CD4-positive, alpha-beta T cell (primary cell): ENCODE measurements at regions of chr9 and their contacts with region 1.

Region 1: DNA sequence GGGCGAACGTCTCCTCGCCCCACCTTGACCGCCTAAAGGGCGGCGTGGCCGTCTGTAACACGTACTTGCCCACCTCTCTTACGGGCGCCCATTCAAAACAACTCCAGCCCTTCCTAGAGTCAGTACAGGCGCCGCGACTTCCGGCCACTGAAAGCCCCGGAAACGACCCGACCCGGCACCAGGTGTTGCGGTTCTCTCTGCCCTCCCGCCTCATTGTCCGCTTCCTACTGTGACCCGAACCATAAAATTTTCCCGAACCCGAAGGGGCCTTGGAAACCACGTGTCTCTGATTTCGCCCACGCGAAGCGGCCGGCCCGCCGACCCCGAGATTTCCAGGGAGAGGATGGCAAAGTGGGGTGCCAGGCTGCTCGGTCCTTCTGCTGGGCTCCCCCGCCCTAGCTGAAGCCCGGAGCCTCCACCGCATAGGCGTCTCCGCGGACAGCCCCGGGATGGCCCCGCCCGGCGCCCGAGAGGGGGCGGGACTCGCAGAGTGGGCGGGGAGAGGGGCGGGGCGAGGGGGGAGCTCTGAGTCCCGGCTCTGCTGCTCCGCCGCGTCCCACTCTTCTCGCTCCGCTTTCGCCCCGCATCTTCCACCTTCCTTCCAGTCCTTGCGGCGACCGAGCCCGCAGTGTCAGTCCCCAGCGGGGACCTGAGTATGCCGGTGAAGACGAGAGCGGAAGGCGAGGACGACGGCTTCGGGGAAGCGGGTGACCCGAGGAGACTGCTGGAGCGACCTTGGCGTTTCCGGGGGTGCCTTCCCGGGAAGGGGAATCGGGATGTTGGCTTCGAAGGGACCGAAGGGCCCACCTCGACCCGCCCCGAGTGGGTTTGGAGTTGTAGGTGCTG is 684 bp upstream of the PTGES2 start:
- DNase-seq: peak; percentile 69 to 94 (median 84)
- ATAC-seq: peak; percentile 79
- H3K4me3 ChIP-seq: peak overlapping the region; percentile 99
- H3K4me3 Mint-ChIP-seq: peak overlapping the region; percentile 100
- H3K27ac ChIP-seq: peak overlapping the region; percentile 94 to 97
- H3K27ac Mint-ChIP-seq: peak overlapping the region; percentile 100
- H3K4me1 ChIP-seq: peaks cover 44% of the 10 kb centered on the region
- H3K4me1 Mint-ChIP-seq: peaks cover 42% of the 10 kb centered on the region
- H3K27me3 ChIP-seq: no peaks in the 10 kb centered on the region
- H3K27me3 Mint-ChIP-seq: peaks cover 3% of the 10 kb centered on the region
- CTCF ChIP-seq: no peak

Region 2: GRCh38 chr9:127802576-127803443 is 325.4 kb before region 1 on chr9 and contains the start of gene FPGS:
- CTCF ChIA-PET with region 1: no interaction called
- POLR2A ChIA-PET with region 1: no interaction called
- intact Hi-C with region 1: loop called in 1 of 2 experiments (anchors 2 kb)
- DNase-seq: peak; percentile 63 to 94 (median 79)
- ATAC-seq: peak; percentile 90
- H3K4me3 ChIP-seq: peak within 1 kb of the TSS; percentile 79
- H3K4me3 Mint-ChIP-seq: peak within 1 kb of the TSS; percentile 91
- H3K27ac ChIP-seq: peak within 1 kb of the TSS; percentile 79
- H3K27ac Mint-ChIP-seq: peak within 1 kb of the TSS; percentile 80
- H3K4me1 ChIP-seq: peaks cover 29% of the 10 kb centered on the region
- H3K4me1 Mint-ChIP-seq: peaks cover 20% of the 10 kb centered on the region
- H3K27me3 ChIP-seq: no peaks in the 10 kb centered on the region
- H3K27me3 Mint-ChIP-seq: no peaks in the 10 kb centered on the region
- CTCF ChIP-seq: no peak
- total RNA-seq, gene FPGS: 58.0 to 66.6 TPM

Region 3: GRCh38 chr9:128159784-128160602 is 31.8 kb after region 1 on chr9 and contains the start of gene BBLN:
- CTCF ChIA-PET with region 1: interaction called, 4 read pairs
- POLR2A ChIA-PET with region 1: interaction called, 29 read pairs
- intact Hi-C with region 1: loop called (anchors 1 kb)
- DNase-seq: peak; percentile 86 to 97 (median 92)
- ATAC-seq: peak; percentile 78
- H3K4me3 ChIP-seq: peak within 1 kb of the TSS; percentile 97
- H3K4me3 Mint-ChIP-seq: peak within 1 kb of the TSS; percentile 89
- H3K27ac ChIP-seq: peak within 1 kb of the TSS; percentile 77 to 86
- H3K27ac Mint-ChIP-seq: peak within 1 kb of the TSS; percentile 92
- H3K4me1 ChIP-seq: peaks cover 24% of the 10 kb centered on the region
- H3K4me1 Mint-ChIP-seq: peaks cover 20% of the 10 kb centered on the region
- H3K27me3 ChIP-seq: no peaks in the 10 kb centered on the region
- H3K27me3 Mint-ChIP-seq: no peaks in the 10 kb centered on the region
- CTCF ChIP-seq: no peak
- total RNA-seq, gene BBLN: 53.6 to 55.9 TPM

Region 4: DNA sequence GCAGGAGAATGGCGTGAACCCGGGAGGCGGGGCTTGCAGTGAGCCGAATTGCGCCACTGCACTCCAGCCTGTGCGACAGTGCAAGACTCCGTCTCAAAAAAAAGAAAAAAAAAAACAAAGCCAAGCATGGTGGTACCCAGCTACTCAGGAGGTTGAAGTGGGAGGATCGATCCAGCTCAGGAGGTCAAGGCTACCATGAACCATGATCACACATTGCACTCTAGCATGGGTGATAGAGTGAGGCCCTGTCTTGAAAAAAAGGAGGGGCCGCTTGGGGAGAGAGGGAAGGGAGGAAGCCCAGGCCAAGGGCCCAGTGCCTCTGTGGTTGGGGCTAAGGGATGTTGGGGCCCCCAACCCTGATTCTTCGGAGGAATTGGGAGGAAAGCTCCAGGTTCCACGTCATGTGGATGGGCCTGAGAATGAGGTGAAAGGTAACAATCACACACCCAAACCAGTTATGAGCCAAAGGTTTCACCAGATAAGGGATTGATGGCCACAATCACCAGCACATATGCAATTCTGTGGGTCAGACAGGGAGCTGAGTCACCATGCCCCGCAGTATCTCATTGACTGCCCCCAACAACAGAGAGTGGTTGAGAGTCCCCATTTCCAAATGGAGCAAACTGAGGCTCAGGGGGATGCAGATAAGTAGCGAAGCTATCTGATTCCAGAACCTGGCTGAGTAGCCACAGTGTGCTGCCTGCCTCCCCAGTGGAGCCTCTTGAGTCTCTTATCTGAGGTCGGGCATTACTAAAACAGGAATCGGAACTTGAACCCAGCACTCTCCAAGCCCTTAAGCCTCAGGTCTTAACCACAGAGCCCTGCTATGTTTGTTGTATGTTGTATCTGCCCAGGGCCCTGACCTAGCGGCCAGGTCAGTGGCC is 168.4 kb after region 1 on chr9:
- CTCF ChIA-PET with region 1: no interaction called
- POLR2A ChIA-PET with region 1: no interaction called
- intact Hi-C with region 1: no loop called
- DNase-seq: no peak
- ATAC-seq: no peak
- H3K4me3 ChIP-seq: no peak overlapping the region
- H3K4me3 Mint-ChIP-seq: no peak overlapping the region
- H3K27ac ChIP-seq: no peak overlapping the region
- H3K27ac Mint-ChIP-seq: no peak overlapping the region
- H3K4me1 ChIP-seq: no peaks in the 10 kb centered on the region
- H3K4me1 Mint-ChIP-seq: peaks cover 5% of the 10 kb centered on the region
- H3K27me3 ChIP-seq: no peaks in the 10 kb centered on the region
- H3K27me3 Mint-ChIP-seq: no peaks in the 10 kb centered on the region
- CTCF ChIP-seq: no peak

Region 5: DNA sequence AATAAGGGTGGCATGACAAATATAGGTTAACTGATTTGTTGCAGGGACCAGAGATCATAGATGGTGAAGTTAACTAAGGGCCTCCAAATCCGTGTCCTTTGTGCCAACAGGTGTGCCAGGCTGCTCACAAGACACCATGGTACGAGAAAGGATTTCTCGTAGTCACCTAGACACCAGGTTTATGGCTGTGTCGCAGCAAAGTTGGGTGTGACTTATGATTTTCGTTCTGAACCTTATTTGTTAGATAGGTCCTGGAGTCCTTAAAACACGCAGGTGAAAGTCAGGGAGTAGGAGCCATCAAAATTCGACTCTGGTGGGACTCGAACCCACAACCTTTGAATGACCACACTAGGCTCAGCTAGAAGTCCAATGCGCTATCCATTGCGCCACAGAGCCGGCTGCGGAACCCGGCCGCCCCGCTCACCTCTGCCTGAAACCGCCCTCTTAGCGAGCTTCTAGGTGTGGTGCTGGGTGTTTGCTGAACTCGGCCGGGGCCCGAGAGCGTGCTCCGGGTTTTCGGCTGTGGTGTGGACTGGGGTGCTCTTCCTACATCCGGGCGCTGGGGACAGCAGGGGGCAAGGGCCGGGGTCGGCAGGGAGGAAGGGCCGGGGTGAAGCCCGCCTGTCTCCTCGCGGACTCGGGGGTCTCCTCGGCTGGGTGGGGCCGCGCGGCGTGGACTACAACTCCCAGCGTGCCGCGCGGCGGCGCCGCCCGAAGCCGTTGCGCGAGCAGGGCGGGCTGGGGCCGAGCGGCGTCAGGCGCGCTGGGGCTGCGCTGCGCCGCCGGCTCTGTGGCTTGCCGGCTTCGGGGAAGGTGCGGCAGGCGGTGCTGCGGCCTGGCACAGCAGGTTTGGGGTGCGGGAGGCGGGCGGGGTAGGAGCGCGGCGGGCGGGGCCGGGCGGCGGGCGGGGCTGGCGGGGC is 211.8 kb after region 1 on chr9 and contains the start of gene SLC27A4:
- CTCF ChIA-PET with region 1: no interaction called
- POLR2A ChIA-PET with region 1: no interaction called
- intact Hi-C with region 1: loop called in 1 of 2 experiments (anchors 5 kb)
- DNase-seq: peak; percentile 61 to 94 (median 76)
- ATAC-seq: peak; percentile 92
- H3K4me3 ChIP-seq: peak within 1 kb of the TSS; percentile 75
- H3K4me3 Mint-ChIP-seq: peak within 1 kb of the TSS; percentile 98
- H3K27ac ChIP-seq: peak within 1 kb of the TSS; percentile 41 to 46
- H3K27ac Mint-ChIP-seq: peak within 1 kb of the TSS; percentile 81
- H3K4me1 ChIP-seq: peaks cover 21% of the 10 kb centered on the region
- H3K4me1 Mint-ChIP-seq: peaks cover 7% of the 10 kb centered on the region
- H3K27me3 ChIP-seq: no peaks in the 10 kb centered on the region
- H3K27me3 Mint-ChIP-seq: no peaks in the 10 kb centered on the region
- CTCF ChIP-seq: no peak
- total RNA-seq, gene SLC27A4: 2.2 to 3.1 TPM